CD4-positive, alpha-beta T cell (primary cell): ENCODE measurements at regions of chr1 and their contacts with region 1.

Region 1: GRCh38 chr1:70354332-70355110 is at the start of gene ANKRD13C:
- DNase-seq: peak; percentile 79 to 97 (median 86)
- ATAC-seq: peak; percentile 89
- H3K4me3 ChIP-seq: peak within 1 kb of the TSS; percentile 98
- H3K4me3 Mint-ChIP-seq: peak within 1 kb of the TSS; percentile 91
- H3K27ac ChIP-seq: peak within 1 kb of the TSS; percentile 94 to 95
- H3K27ac Mint-ChIP-seq: peak within 1 kb of the TSS; percentile 97
- H3K4me1 ChIP-seq: peaks cover 28% of the 10 kb centered on the region
- H3K4me1 Mint-ChIP-seq: peaks cover 50% of the 10 kb centered on the region
- H3K27me3 ChIP-seq: no peaks in the 10 kb centered on the region
- H3K27me3 Mint-ChIP-seq: no peaks in the 10 kb centered on the region
- CTCF ChIP-seq: no peak
- total RNA-seq, gene ANKRD13C: 37.4 to 37.8 TPM

Region 2: DNA sequence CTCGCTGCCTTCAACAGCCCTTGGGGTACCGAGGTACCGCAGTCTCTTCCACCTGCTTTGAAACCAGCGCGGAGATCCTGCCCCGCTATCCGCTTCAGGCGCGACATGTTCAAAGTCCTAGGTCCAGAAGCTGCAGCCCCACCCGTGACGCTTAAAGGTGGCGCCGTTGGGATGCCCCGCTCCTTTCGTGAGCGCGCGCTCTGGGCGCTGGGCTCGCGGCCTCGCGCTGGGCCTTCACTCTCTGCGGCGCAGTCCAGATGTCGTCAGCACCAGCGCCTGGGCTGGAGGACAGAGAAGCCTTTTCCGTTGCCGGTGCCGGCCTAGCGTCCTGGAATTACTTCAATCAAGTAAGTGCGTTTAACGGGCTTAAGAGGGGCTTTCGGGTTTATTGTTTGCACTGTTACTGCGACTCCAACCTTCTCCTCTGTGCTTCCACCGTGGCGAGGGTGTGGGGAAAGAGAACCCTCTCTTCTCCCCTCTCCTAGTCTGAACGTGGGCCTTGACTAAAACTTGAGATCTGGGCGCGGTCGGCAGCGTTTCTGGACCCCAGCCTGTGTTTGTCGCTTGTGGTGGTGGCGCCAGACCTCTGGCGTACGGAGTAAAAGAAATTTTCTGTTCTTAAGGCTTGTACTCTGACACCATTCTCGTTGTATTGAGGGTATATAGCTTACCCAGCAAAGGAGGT is 148.9 kb before region 1 on chr1 and contains the start of gene LRRC40:
- CTCF ChIA-PET with region 1: no interaction called
- POLR2A ChIA-PET with region 1: interaction called, 28 read pairs
- intact Hi-C with region 1: loop called in 1 of 2 experiments (anchors 5 kb)
- DNase-seq: peak; percentile 88 to 98 (median 95)
- ATAC-seq: peak; percentile 90
- H3K4me3 ChIP-seq: peak within 1 kb of the TSS; percentile 81
- H3K4me3 Mint-ChIP-seq: peak within 1 kb of the TSS; percentile 99
- H3K27ac ChIP-seq: peak within 1 kb of the TSS; percentile 85 to 97
- H3K27ac Mint-ChIP-seq: peak within 1 kb of the TSS; percentile 99
- H3K4me1 ChIP-seq: peaks cover 38% of the 10 kb centered on the region
- H3K4me1 Mint-ChIP-seq: peaks cover 84% of the 10 kb centered on the region
- H3K27me3 ChIP-seq: no peaks in the 10 kb centered on the region
- H3K27me3 Mint-ChIP-seq: no peaks in the 10 kb centered on the region
- CTCF ChIP-seq: no peak
- total RNA-seq, gene LRRC40: 12.4 to 13.3 TPM

Region 3: DNA sequence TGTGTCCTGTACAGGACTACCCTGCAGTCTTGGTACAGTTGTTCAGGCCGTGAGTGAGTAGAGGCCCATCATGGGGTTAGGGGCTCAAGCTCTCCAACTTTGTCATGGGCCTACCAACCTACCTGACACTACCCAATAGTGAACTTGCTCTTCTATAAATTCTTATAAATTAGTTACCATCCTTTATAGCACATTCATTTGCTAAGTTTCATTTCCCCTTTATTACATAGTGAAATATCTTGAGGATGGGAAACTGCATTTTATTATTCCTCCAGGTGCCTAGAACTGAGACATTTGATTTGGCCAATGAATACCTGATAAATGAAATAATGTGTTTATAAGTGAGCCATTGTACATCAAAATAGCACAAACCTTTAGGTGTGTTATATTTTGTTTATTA is 47.5 kb after region 1 on chr1:
- CTCF ChIA-PET with region 1: no interaction called
- POLR2A ChIA-PET with region 1: no interaction called
- intact Hi-C with region 1: loop called in 1 of 2 experiments (anchors 1 kb)
- DNase-seq: no peak
- ATAC-seq: no peak
- H3K4me3 ChIP-seq: no peak overlapping the region
- H3K4me3 Mint-ChIP-seq: no peak overlapping the region
- H3K27ac ChIP-seq: no peak overlapping the region
- H3K27ac Mint-ChIP-seq: no peak overlapping the region
- H3K4me1 ChIP-seq: no peaks in the 10 kb centered on the region
- H3K4me1 Mint-ChIP-seq: no peaks in the 10 kb centered on the region
- H3K27me3 ChIP-seq: no peaks in the 10 kb centered on the region
- H3K27me3 Mint-ChIP-seq: peaks cover 25% of the 10 kb centered on the region
- CTCF ChIP-seq: no peak

Region 4: GRCh38 chr1:70410604-70411359 is 56.3 kb after region 1 on chr1 and contains the start of gene CTH:
- CTCF ChIA-PET with region 1: interaction called, 15 read pairs
- POLR2A ChIA-PET with region 1: interaction called, 183 read pairs
- intact Hi-C with region 1: loop called (anchors 1 to 2 kb)
- DNase-seq: peak; percentile 76 to 97 (median 89)
- ATAC-seq: peak; percentile 91
- H3K4me3 ChIP-seq: peak within 1 kb of the TSS; percentile 94
- H3K4me3 Mint-ChIP-seq: peak within 1 kb of the TSS; percentile 96
- H3K27ac ChIP-seq: peak within 1 kb of the TSS; percentile 82 to 96
- H3K27ac Mint-ChIP-seq: peak within 1 kb of the TSS; percentile 97
- H3K4me1 ChIP-seq: peaks cover 10% of the 10 kb centered on the region
- H3K4me1 Mint-ChIP-seq: peaks cover 31% of the 10 kb centered on the region
- H3K27me3 ChIP-seq: no peaks in the 10 kb centered on the region
- H3K27me3 Mint-ChIP-seq: peaks cover 6% of the 10 kb centered on the region
- CTCF ChIP-seq: no peak
- total RNA-seq, gene CTH: 5.6 to 7.9 TPM

Region 5: DNA sequence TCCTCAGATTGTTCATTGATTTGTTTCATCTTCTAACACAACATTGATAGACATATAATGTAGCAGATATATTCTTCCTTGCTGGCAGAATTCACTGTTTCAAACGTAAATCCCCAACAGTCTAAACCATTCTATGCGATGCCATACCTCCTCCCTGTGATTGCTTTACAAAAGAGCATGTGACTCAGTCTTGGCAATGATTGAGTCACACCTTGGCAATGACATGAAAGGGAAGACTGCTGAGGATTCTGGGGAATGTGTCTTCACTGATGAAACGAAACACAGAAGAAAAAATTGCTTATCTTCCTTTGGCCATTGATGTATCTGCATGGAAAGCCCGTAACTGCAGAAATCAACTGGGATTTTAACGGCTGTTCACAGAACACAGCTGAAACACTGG is 1135.9 kb after region 1 on chr1:
- CTCF ChIA-PET with region 1: no interaction called
- POLR2A ChIA-PET with region 1: no interaction called
- intact Hi-C with region 1: no loop called
- DNase-seq: no peak
- ATAC-seq: no peak
- H3K4me3 ChIP-seq: no peak overlapping the region
- H3K4me3 Mint-ChIP-seq: no peak overlapping the region
- H3K27ac ChIP-seq: no peak overlapping the region
- H3K27ac Mint-ChIP-seq: no peak overlapping the region
- H3K4me1 ChIP-seq: no peaks in the 10 kb centered on the region
- H3K4me1 Mint-ChIP-seq: no peaks in the 10 kb centered on the region
- H3K27me3 ChIP-seq: no peaks in the 10 kb centered on the region
- H3K27me3 Mint-ChIP-seq: no peaks in the 10 kb centered on the region
- CTCF ChIP-seq: no peak